Activated CD4-positive, alpha-beta T cell treated with anti-CD3 and anti-CD28 coated beads for 36 hours (primary cell): ENCODE measurements at regions of chr7 and their contacts with region 1.

Region 1: DNA sequence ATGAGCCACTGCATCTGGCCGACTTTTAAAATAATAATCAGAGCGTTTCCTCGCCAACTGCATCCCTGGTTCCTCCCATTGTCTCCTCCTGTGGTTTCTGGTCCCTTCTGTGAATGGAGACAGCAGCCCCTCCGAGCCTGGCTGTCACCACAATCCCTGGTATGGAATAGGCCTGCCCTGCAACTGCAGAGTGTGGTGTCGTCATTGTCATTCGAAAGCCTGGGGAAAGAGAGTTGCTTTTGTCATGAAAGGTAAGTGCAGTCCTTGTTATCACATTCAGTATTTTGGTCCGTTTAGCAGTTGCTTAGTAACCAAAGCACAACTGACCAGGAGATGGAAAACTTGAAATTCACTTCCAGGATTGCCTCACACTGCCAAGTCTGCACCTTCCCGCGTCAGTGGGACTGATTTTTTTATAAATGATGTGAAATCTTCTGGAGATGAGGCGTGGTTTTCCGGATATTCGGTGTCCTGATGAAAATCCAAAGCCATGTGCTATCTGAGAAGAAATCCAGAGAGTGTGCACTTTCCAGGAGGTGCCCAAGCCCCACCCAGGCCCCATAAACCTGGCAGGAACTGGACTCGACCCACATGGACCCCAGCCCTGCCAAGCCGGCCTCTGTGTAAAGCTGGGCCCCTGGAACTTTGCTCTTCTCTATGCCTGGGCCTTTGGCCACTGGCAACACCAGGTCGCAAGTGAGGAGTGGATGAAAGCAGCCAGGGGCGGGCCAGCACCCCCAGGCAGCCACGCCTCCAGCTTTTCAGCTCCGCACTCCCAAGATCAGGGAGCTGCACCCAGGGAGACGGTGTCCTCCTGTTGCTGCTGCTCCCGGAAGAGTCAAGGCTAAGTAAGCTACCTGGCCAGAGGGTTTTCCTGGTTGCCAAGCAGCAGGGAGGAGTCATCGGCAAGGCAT is 133.7 kb upstream of the SH2B2 start:
- DNase-seq: no peak
- ATAC-seq: no peak
- H3K4me3 Mint-ChIP-seq: no peak overlapping the region
- H3K27ac Mint-ChIP-seq: no peak overlapping the region
- H3K4me1 Mint-ChIP-seq: no peaks in the 10 kb centered on the region
- H3K27me3 Mint-ChIP-seq: no peaks in the 10 kb centered on the region

Region 2: DNA sequence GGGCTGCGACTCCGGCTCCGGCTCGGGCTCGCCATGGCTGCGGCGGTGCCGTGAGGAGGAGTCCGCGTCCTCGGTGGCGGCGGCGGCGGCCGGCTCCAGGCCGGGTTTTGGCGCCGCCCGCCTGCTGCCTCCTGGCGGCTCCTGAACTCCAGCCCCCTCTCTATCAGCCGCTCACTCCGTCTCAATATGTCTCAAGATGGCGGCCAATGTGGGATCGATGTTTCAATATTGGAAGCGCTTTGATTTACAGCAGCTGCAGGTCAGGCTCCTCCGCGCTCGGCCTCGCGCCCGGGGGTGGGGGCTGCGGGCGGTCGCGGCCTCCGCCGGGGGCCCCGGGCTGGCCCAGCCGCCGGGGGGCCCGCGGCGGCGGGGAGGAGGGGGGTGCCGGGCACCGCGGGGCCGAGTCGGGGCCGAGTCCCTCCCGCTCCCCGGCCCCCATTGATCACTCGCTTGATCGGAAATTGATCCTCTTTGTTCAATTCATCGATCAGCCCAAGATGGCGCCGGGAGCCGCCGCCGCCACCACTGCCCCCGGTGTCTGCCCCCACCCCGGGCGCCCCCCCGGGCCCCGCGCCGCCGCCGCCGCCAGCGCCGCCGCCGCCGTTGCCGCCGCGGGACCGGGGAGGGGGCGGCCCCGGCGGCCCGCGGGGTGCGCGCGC is 337.0 kb before region 1 on chr7:
- CTCF ChIA-PET with region 1: no interaction called
- POLR2A ChIA-PET with region 1: no interaction called
- intact Hi-C with region 1: no loop called
- DNase-seq: peak; percentile 85
- ATAC-seq: peak; percentile 78
- H3K4me3 Mint-ChIP-seq: peak overlapping the region; percentile 72
- H3K27ac Mint-ChIP-seq: peak overlapping the region; percentile 42
- H3K4me1 Mint-ChIP-seq: peaks cover 26% of the 10 kb centered on the region
- H3K27me3 Mint-ChIP-seq: peaks cover 2% of the 10 kb centered on the region

Region 3: GRCh38 chr7:102132209-102132752 is 20.6 kb before region 1 on chr7:
- CTCF ChIA-PET with region 1: no interaction called
- POLR2A ChIA-PET with region 1: no interaction called
- intact Hi-C with region 1: loop called in 1 of 2 experiments (anchors 2 kb)
- DNase-seq: no peak
- ATAC-seq: no peak
- H3K4me3 Mint-ChIP-seq: no peak overlapping the region
- H3K27ac Mint-ChIP-seq: no peak overlapping the region
- H3K4me1 Mint-ChIP-seq: no peaks in the 10 kb centered on the region
- H3K27me3 Mint-ChIP-seq: no peaks in the 10 kb centered on the region